ENCODE measurements at regions of chr15 and their contacts with region 1.

Region 1: GRCh38 chr15:90362936-90363212 is 10.8 kb downstream of the ZNF774 start:
- DNase-seq: no peak
- ATAC-seq: peak in 3 of 4 donors; percentile 41 to 78 (median 57)
- H3K4me3 ChIP-seq: no peak overlapping the region
- H3K27ac ChIP-seq: peak overlapping the region in 10 of 12 donors; percentile 45 to 88 (median 74)
- H3K4me1 ChIP-seq: peaks cover 0 to 48% (median 16%) of the 10 kb centered on the region in 12 donors
- H3K27me3 ChIP-seq: no peaks in the 10 kb centered on the region
- CTCF ChIP-seq: no peak
- POLR2A ChIP-seq: no peak

Region 2: GRCh38 chr15:90300988-90301706 is 61.7 kb before region 1 on chr15:
- intact Hi-C with region 1: no loop called
- DNase-seq: peak; percentile 51 to 85 (median 75)
- ATAC-seq: peak in 3 of 4 donors; percentile 54 to 74 (median 72)
- H3K4me3 ChIP-seq: no peak overlapping the region
- H3K27ac ChIP-seq: peak overlapping the region in 2 of 12 donors; percentile 26 to 30
- H3K4me1 ChIP-seq: peaks cover 0 to 22% (median 10%) of the 10 kb centered on the region in 12 donors
- H3K27me3 ChIP-seq: no peaks in the 10 kb centered on the region
- CTCF ChIP-seq: peak; percentile 52 to 85 (median 79)
- POLR2A ChIP-seq: no peak

Region 3: GRCh38 chr15:90482124-90483011 is 119.5 kb after region 1 on chr15:
- intact Hi-C with region 1: loop called (anchors 1 to 5 kb)
- DNase-seq: peak in 2 of 5 donors; percentile 23 to 40
- ATAC-seq: peak; percentile 47 to 68 (median 62)
- H3K4me3 ChIP-seq: no peak overlapping the region
- H3K27ac ChIP-seq: no peak overlapping the region
- H3K4me1 ChIP-seq: peaks cover 0 to 6% (median 0%) of the 10 kb centered on the region in 12 donors
- H3K27me3 ChIP-seq: no peaks in the 10 kb centered on the region
- CTCF ChIP-seq: peak; percentile 57 to 88 (median 72)
- POLR2A ChIP-seq: no peak